Calu3 (cell line): ENCODE measurements at regions of chr6 and their contacts with region 1.

Region 1: DNA sequence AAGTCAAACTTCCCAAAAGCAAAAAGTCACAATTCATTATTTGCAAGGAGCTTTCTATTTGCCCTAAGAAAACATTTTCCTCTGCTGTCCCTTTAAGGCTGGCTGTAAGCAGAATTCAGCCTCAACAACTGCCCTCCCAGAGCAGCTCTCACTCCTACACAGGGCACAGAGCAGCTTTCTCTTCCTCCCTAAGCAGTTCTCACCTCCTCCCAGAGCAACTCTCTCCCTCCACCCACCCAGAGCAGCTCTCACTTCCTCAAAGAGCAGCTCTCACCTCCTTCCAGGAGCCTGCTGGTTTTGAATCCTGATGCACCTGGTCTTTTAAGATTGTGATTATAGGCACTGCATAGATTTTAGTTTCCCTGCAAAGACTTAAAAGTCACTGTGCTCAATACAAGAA is 120.6 kb upstream of the TMEM181 start:
- DNase-seq: no peak
- H3K4me3 Mint-ChIP-seq: no peak overlapping the region
- H3K27ac Mint-ChIP-seq: no peak overlapping the region
- H3K4me1 Mint-ChIP-seq: no peaks in the 10 kb centered on the region
- H3K27me3 Mint-ChIP-seq: no peaks in the 10 kb centered on the region
- CTCF ChIP-seq: no peak

Region 2: GRCh38 chr6:158373214-158373613 is 66.0 kb before region 1 on chr6:
- CTCF ChIA-PET with region 1: no interaction called
- intact Hi-C with region 1: no loop called
- DNase-seq: no peak
- H3K4me3 Mint-ChIP-seq: no peak overlapping the region
- H3K27ac Mint-ChIP-seq: no peak overlapping the region
- H3K4me1 Mint-ChIP-seq: no peaks in the 10 kb centered on the region
- H3K27me3 Mint-ChIP-seq: no peaks in the 10 kb centered on the region
- CTCF ChIP-seq: no peak

Region 3: GRCh38 chr6:158418501-158418900 is 20.8 kb before region 1 on chr6:
- CTCF ChIA-PET with region 1: interaction called, 10 read pairs
- intact Hi-C with region 1: no loop called
- DNase-seq: no peak
- H3K4me3 Mint-ChIP-seq: no peak overlapping the region
- H3K27ac Mint-ChIP-seq: no peak overlapping the region
- H3K4me1 Mint-ChIP-seq: peaks cover 25% of the 10 kb centered on the region
- H3K27me3 Mint-ChIP-seq: no peaks in the 10 kb centered on the region
- CTCF ChIP-seq: no peak

Region 4: GRCh38 chr6:158460602-158461169 is 21.4 kb after region 1 on chr6:
- CTCF ChIA-PET with region 1: no interaction called
- intact Hi-C with region 1: loop called (anchors 1 kb)
- DNase-seq: no peak
- H3K4me3 Mint-ChIP-seq: no peak overlapping the region
- H3K27ac Mint-ChIP-seq: no peak overlapping the region
- H3K4me1 Mint-ChIP-seq: peaks cover 21% of the 10 kb centered on the region
- H3K27me3 Mint-ChIP-seq: no peaks in the 10 kb centered on the region
- CTCF ChIP-seq: no peak